ENCODE measurements at regions of chr1 and their contacts with region 1.

Region 1: DNA sequence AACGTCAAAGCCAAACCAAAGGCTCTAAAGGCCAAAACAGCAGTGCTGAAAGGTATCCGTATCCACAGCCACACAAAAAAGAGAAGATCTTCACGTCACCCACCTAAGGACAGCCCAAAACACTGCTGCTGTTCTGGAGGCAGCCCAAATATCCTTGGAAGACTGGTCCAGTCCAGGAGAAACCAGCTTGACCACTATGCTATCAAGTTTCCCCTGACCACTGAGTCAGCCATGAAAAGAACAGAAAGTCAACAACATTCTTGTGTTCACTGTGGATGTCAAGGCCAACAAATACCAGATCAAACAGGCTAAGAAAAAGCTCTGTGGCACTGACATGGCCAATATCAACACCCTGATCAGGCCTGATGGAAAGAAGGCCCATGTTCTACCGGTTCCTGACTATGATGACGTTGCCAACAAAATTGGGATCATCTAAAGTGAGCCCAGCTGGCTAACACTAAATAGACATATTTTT is 32.0 kb downstream of the ARID4B start:
- DNase-seq: peak in 1 of 2 donors; percentile 57
- H3K4me3 ChIP-seq: no peak overlapping the region
- H3K27ac ChIP-seq: peak overlapping the region; percentile 3 to 63
- H3K4me1 ChIP-seq: no peaks in the 10 kb centered on the region
- H3K27me3 ChIP-seq: no peaks in the 10 kb centered on the region
- CTCF ChIP-seq: no peak
- POLR2A ChIP-seq: no peak

Region 2: DNA sequence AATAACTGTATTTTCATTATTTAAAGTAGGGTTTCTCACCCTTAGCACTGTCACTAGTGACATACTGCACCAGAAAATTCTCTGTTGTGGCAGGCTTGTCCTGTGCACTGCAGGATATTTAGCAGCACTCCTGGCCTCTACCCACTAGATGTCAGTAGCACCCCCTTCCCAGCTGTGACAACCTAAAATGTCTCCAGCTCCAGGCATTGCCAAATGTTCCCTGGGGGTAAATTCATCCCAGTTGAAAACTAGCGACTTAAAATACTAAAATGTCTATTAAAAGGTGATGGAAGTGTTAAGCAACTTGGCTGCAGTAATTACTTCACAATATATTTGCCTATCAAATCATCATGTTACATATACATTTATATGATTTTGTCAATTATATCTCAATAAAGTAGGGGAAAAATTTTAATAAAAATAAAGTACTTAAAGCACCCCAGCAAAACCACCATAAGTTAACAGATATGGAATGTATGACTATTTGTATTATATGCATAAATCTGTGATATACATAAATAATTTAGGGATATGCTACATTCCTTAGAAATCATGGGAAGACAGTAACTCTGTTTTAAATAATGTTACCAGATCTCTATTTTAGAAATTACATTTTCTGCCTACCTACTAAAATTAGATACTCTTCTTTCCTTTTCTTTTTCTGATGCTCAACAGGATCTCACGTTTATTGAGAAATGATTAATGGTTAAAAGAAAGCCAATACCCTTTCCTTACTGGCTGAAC is 42.5 kb before region 1 on chr1:
- intact Hi-C with region 1: loop called (anchors 2 kb)
- DNase-seq: no peak
- H3K4me3 ChIP-seq: no peak overlapping the region
- H3K27ac ChIP-seq: no peak overlapping the region
- H3K4me1 ChIP-seq: no peaks in the 10 kb centered on the region
- H3K27me3 ChIP-seq: no peaks in the 10 kb centered on the region
- CTCF ChIP-seq: peak; percentile 39 to 80 (median 67)
- POLR2A ChIP-seq: no peak

Measured in breast epithelium (tissue), 4 donors.